ENCODE measurements at regions of chr15 and their contacts with region 1.

Region 1: GRCh38 chr15:99239545-99240198 is 9.7 kb downstream of the TTC23 start:
- DNase-seq: no peak
- ATAC-seq: no peak
- H3K4me3 ChIP-seq: no peak overlapping the region
- H3K27ac ChIP-seq: no peak overlapping the region
- H3K4me1 ChIP-seq: peaks cover 10% of the 10 kb centered on the region
- H3K27me3 ChIP-seq: no peaks in the 10 kb centered on the region
- CTCF ChIP-seq: no peak

Region 2: DNA sequence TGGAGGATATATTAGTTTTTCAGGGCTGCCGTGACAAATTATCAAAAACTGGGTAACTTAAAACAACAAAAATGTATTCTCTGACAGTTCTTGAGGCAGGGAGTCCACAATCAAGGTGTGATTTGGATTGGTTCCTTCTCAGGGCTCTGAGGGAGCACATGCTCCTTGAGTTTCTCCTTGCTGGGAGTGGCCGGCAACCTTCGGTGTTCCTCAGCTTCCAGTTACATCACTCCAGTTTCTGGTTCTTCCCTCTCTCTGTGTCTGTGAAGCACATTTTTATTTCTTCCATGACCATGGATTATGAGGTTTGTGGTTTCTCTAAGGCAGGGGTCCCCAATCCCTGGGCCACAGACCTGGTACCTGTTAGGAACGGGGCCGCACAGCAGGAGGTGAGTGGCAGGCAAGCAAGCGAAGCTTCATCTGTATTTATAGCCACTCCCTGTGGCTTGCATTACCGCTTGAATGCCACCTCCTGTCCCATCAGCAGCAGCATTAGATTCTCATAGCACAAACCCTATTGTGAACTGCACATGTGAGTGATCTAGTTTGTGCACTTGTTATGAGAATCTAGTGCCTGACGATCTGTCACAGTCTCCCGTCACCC is 36.0 kb after region 1 on chr15:
- CTCF ChIA-PET with region 1: no interaction called
- POLR2A ChIA-PET with region 1: interaction called, 12 read pairs
- intact Hi-C with region 1: no loop called
- DNase-seq: no peak
- ATAC-seq: no peak
- H3K4me3 ChIP-seq: no peak overlapping the region
- H3K27ac ChIP-seq: no peak overlapping the region
- H3K4me1 ChIP-seq: no peaks in the 10 kb centered on the region
- H3K27me3 ChIP-seq: no peaks in the 10 kb centered on the region
- CTCF ChIP-seq: no peak